Lower leg skin (tissue), 4 donors: ENCODE measurements at regions of chr2 and their contacts with region 1.

Region 1: DNA sequence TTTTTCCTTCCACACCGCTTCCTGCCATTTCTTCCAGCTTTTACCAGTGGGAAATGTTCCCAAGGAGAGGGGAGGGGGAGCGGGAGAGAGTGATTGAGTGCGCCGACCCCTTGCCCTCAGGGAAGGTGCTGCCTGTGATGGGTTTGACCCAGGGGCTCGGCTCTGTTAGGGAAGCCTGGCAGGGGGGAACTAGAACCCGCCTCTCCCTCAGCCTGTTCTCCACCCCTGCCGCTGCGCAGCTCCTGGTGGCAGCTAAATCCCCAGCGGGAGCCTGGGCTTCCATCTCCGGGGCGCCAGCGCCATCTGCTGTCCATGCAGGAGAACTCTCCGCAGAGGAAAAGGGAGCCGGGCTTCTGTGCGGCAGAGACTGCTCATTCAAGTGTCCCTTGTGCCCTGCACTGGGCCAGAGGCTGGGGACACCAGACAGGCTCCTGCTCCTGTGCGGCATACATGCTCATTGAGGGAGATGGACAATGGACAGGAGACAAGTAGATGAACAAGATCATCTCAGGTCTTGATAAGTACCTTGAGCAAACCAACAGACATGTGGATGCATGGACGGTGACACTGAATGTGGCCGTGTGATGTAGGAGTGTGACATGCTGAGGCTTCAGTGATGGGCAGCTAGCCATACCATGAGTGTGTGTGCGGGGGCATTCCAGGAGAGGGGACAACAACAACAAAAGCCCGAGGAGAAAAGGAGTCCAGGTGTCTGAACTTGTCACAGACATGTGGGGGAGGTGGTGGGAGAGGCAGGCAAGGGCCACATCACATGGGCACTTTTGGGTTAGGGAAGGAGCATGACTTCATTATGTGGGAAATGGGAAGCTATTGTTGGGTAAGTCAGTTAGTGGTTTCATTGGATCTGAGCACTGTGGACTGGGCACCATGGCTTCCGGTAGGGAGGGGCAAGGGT is 13.3 kb downstream of the CHPF start:
- DNase-seq: peak; percentile 62 to 96
- H3K4me3 ChIP-seq: no peak overlapping the region
- CTCF ChIP-seq: peak in 1 of 3 donors; percentile 89
- POLR2A ChIP-seq: no peak

Region 2: DNA sequence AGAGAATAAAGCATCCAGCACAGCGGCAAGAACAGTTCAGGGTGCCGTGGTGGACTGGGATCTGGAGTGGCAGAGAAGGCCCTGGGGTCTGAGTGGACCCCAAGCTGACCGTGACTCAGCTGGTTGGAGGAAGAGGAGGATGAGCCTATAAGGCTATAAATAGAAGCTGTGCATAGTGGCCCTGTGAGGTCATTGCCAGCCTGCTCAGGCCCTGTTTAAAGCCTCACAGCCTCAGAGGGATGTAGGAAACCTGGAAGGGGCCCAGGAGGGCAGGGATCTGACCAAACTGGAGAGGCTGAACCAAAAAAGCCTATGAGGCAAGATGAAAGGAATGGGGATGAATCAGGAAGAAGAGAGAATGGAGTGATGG is 123.5 kb before region 1 on chr2:
- intact Hi-C with region 1: loop called (anchors 5 kb)
- DNase-seq: no peak
- H3K4me3 ChIP-seq: no peak overlapping the region
- CTCF ChIP-seq: no peak
- POLR2A ChIP-seq: no peak

Region 3: DNA sequence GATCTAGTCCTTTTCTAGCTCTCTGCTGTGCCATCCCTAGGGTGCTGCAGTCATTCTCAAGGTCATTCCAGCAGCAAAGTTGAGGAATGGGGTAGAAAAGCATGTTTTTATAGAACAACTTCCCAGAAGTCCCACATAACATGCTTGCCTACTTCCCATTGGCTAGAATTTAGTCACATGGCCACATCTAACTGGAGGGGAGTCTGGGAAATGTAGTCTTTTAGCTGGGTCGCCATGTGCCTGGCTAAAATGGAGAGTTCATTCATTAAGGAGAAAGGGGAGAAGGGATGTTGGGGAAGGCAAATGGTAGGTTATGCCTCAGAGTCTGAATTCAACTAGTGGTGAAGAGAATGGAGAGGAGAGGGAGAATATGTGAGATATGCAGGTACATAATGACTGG is 182.8 kb after region 1 on chr2:
- intact Hi-C with region 1: no loop called
- DNase-seq: no peak
- H3K4me3 ChIP-seq: no peak overlapping the region
- CTCF ChIP-seq: no peak
- POLR2A ChIP-seq: no peak

Region 4: DNA sequence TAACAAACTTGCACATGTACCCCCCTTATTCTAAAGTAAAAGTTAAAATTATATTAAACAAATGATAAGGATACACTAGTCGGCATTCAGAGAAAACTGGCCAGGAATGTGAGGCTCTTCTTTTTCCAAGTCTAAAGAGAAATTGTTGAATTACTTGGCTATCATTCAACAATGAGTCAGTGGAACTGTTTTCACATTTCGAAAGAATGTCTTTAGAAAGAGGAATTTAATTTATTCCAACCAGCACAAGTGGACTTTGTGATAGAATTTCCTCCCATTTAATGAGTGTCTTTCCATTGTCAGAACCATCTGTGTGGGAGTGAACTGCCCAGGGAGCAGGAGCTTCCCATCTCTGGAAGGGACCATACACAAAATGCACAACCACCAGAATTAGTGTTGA is 1249.6 kb after region 1 on chr2:
- intact Hi-C with region 1: no loop called
- DNase-seq: no peak
- H3K4me3 ChIP-seq: no peak overlapping the region
- CTCF ChIP-seq: no peak
- POLR2A ChIP-seq: no peak